Prostate gland (tissue), 2 donors: ENCODE measurements at regions of chr22 and their contacts with region 1.

Region 1: GRCh38 chr22:28594797-28595462 is 84.7 kb downstream of the TTC28 start:
- DNase-seq: no peak
- H3K4me3 ChIP-seq: no peak overlapping the region
- H3K27ac ChIP-seq: no peak overlapping the region
- H3K4me1 ChIP-seq: no peaks in the 10 kb centered on the region
- H3K27me3 ChIP-seq: no peaks in the 10 kb centered on the region
- CTCF ChIP-seq: peak; percentile 22 to 91 (median 80)
- POLR2A ChIP-seq: no peak

Region 2: DNA sequence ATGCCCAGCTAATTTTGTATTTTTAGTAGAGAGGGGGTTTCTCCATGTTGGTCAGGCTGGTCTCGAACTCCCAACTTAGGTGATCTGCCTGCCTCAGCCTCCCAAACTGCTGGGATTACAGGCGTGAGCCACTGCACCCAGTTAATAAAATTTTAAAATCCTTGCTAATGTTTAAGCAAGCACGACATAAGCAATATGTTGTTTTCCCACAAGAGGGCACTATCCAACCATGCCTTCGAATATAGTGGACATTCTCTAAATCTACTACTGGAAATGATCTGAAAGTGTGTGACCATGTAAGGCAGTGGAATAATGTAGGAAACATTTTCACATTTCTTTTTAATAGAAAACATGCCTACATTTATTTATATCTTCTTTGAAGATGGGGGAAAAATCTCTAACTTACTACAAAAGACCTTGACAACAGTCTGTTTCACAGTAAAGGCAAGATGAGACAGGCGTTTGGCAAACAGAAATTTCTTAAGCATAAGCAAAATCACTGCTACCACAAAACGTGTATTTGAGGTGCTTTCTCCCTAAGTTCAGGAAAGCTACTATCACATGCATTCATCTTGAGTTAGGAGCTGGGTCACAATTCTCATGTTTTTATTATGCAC is 714.0 kb before region 1 on chr22:
- intact Hi-C with region 1: loop called (anchors 10 kb)
- DNase-seq: peak; percentile 55
- H3K4me3 ChIP-seq: no peak overlapping the region
- H3K27ac ChIP-seq: peak overlapping the region; percentile 53 to 60
- H3K4me1 ChIP-seq: no peaks in the 10 kb centered on the region
- H3K27me3 ChIP-seq: no peaks in the 10 kb centered on the region
- CTCF ChIP-seq: peak; percentile 49 to 85 (median 74)
- POLR2A ChIP-seq: no peak

Region 3: GRCh38 chr22:28019881-28020871 is 574.8 kb before region 1 on chr22:
- intact Hi-C with region 1: loop called (anchors 2 kb)
- DNase-seq: peak; percentile 64
- H3K4me3 ChIP-seq: no peak overlapping the region
- H3K27ac ChIP-seq: no peak overlapping the region
- H3K4me1 ChIP-seq: no peaks in the 10 kb centered on the region
- H3K27me3 ChIP-seq: no peaks in the 10 kb centered on the region
- CTCF ChIP-seq: peak; percentile 89 to 93 (median 92)
- POLR2A ChIP-seq: no peak

Region 4: GRCh38 chr22:28051787-28052356 is 543.1 kb before region 1 on chr22:
- intact Hi-C with region 1: loop called (anchors 2 kb)
- DNase-seq: peak; percentile 44
- H3K4me3 ChIP-seq: no peak overlapping the region
- H3K27ac ChIP-seq: no peak overlapping the region
- H3K4me1 ChIP-seq: no peaks in the 10 kb centered on the region
- H3K27me3 ChIP-seq: no peaks in the 10 kb centered on the region
- CTCF ChIP-seq: peak in 3 of 4 experiments; percentile 68 to 82 (median 77)
- POLR2A ChIP-seq: no peak